Activated naive CD4-positive, alpha-beta T cell treated with anti-CD3 and anti-CD28 coated beads for 36 hours (primary cell): ENCODE measurements at regions of chr11 and their contacts with region 1.

Region 1: GRCh38 chr11:118227865-118228785 is 3.3 kb upstream of the JAML start:
- DNase-seq: peak; percentile 30
- H3K4me3 Mint-ChIP-seq: peak overlapping the region; percentile 3
- H3K27ac Mint-ChIP-seq: peak overlapping the region; percentile 89
- H3K4me1 Mint-ChIP-seq: peaks cover 20% of the 10 kb centered on the region
- H3K27me3 Mint-ChIP-seq: no peaks in the 10 kb centered on the region

Region 2: DNA sequence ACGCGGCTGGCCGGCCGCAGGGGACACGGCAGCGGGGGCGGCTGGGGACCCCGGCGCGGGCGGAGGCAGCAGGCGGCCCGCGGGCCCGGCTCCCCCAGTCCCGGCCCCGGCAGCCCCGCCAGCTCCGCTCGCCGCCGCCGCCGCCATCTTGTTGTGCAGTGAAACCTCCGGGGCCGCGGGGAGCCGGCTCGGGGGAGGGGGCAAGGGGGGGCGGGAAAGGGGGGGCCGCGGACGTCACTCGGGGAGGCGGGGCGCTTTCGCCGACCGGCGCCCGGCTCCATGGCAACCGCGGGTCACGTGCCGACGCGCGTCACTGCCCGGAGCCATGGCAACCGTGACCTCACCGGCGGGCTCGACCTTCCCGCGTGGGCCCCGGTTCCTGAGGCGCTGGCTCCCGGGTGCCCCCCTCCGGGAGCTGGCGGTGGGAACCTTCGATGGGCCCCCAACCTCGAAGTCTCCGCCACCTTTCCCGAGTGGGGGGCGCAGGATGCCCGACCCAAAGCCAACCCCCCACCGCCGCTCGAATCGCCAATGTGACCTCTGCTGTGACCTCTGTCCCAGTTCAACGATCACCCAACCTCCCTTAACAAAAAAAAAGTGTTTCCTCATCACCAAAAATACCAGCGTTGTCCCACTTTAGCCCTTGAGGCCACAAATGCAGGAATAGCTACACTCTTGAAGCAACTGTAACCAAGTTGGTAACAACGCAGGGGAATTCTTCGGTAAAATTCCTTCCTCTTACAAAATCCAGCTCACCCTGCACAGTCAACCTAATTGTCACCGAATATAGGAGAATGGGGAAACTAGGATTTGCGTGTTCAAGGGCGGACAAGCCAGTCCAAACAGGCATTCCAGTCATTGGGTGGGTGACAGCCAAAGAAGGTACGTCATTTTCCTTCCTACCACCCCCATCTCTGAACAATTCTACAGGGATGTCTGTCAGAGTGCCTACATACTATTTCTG is 1129.6 kb before region 1 on chr11 and contains the start of gene SIK3:
- CTCF ChIA-PET with region 1: no interaction called
- intact Hi-C with region 1: loop called (anchors 10 kb)
- DNase-seq: peak; percentile 90
- H3K4me3 Mint-ChIP-seq: peak within 1 kb of the TSS; percentile 97
- H3K27ac Mint-ChIP-seq: peak within 1 kb of the TSS; percentile 89
- H3K4me1 Mint-ChIP-seq: peaks cover 47% of the 10 kb centered on the region
- H3K27me3 Mint-ChIP-seq: no peaks in the 10 kb centered on the region
- total RNA-seq, gene SIK3: 13.8 to 15.7 TPM

Region 3: DNA sequence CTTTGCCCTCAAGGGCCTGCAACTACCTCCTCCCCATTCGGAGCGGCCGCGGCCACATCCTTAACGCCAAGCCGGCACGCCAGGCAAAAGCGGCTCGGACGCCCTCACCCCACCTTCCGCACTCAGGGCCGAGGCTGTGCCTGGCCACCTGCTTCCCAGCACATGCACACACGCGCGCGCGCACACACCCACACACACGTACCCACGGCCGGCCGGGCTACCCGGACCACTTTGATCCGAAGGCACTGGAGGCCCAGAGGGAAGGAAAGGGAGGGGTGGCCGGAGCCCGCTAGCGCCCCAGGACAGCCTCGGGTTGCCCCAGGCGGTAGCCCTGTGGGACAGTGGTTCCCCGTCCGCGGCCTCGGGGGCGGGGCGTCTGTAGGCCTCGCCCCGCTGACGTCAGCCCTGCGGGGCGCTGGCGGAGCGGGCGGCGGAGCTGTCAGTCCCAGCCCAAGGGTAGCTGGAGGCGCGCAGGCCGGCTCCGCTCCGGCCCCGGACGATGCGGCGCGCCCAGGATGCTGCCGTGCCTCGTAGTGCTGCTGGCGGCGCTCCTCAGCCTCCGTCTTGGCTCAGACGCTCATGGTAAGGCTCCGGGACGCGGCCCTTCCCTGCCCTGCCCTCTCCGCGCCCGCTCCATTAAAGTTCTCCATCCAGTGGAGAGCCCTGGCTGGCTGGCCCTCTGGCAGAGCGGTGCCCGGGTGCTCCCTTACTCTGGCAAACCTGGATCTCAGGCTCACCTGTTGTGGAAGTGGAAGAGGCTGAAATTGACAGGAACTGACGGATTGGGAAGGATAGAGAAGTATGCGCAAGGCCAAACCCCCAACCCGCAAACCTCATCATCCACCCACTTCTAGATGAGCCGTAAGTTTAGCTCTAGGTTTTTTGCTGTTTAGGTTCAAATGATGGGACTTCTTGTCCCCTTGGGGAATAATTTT is 241.9 kb before region 1 on chr11 and contains the start of gene IL10RA:
- CTCF ChIA-PET with region 1: no interaction called
- intact Hi-C with region 1: no loop called
- DNase-seq: peak; percentile 81
- H3K4me3 Mint-ChIP-seq: peak within 1 kb of the TSS; percentile 84
- H3K27ac Mint-ChIP-seq: peak within 1 kb of the TSS; percentile 88
- H3K4me1 Mint-ChIP-seq: peaks cover 63% of the 10 kb centered on the region
- H3K27me3 Mint-ChIP-seq: no peaks in the 10 kb centered on the region
- total RNA-seq, gene IL10RA: 11.3 to 16.1 TPM

Region 4: GRCh38 chr11:118117790-118118601 is 110.1 kb before region 1 on chr11:
- CTCF ChIA-PET with region 1: no interaction called
- intact Hi-C with region 1: no loop called
- DNase-seq: no peak
- H3K4me3 Mint-ChIP-seq: no peak overlapping the region
- H3K27ac Mint-ChIP-seq: no peak overlapping the region
- H3K4me1 Mint-ChIP-seq: no peaks in the 10 kb centered on the region
- H3K27me3 Mint-ChIP-seq: peaks cover 6% of the 10 kb centered on the region

Region 5: DNA sequence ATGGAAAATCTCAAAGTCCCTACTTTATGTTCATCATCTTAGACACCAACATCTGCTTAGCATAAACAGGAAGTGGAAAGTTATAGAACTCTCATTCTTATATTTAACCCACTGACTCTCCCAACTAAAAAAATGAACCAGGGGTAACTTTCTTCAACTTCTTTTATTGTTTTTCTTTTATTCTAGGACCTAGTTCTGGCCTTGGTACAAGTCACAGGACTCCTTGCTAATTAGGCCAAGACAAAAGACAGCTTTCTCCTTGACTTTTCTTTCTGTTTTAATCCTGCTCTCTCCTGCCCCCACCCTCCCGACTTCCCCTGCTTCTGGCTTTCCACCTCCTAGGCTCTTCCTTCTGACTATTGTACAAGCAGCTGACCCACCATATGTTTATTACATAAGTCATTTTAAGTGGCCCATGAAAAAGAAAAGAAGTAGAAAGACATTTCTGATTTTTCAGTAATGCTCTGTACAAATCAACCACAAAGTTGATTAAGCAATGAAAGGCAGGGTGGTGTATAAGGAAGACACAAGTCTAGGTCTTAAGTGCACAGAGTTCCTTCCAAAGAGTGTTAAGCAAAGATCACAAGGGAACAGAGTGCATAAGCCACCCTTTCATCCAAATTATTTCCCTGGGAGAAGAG is 21.6 kb before region 1 on chr11:
- CTCF ChIA-PET with region 1: interaction called, 7 read pairs
- intact Hi-C with region 1: loop called (anchors 1 kb)
- DNase-seq: no peak
- H3K4me3 Mint-ChIP-seq: peak overlapping the region; percentile 11
- H3K27ac Mint-ChIP-seq: peak overlapping the region; percentile 88
- H3K4me1 Mint-ChIP-seq: peaks cover 32% of the 10 kb centered on the region
- H3K27me3 Mint-ChIP-seq: no peaks in the 10 kb centered on the region

Region 6: GRCh38 chr11:118240999-118241768 is 13.1 kb after region 1 on chr11:
- CTCF ChIA-PET with region 1: interaction called, 15 read pairs
- intact Hi-C with region 1: loop called (anchors 1 kb)
- DNase-seq: peak; percentile 87
- H3K4me3 Mint-ChIP-seq: peak overlapping the region; percentile 77
- H3K27ac Mint-ChIP-seq: peak overlapping the region; percentile 99
- H3K4me1 Mint-ChIP-seq: peaks cover 91% of the 10 kb centered on the region
- H3K27me3 Mint-ChIP-seq: no peaks in the 10 kb centered on the region